ENCODE measurements at regions of chr14 and their contacts with region 1.

Region 1: DNA sequence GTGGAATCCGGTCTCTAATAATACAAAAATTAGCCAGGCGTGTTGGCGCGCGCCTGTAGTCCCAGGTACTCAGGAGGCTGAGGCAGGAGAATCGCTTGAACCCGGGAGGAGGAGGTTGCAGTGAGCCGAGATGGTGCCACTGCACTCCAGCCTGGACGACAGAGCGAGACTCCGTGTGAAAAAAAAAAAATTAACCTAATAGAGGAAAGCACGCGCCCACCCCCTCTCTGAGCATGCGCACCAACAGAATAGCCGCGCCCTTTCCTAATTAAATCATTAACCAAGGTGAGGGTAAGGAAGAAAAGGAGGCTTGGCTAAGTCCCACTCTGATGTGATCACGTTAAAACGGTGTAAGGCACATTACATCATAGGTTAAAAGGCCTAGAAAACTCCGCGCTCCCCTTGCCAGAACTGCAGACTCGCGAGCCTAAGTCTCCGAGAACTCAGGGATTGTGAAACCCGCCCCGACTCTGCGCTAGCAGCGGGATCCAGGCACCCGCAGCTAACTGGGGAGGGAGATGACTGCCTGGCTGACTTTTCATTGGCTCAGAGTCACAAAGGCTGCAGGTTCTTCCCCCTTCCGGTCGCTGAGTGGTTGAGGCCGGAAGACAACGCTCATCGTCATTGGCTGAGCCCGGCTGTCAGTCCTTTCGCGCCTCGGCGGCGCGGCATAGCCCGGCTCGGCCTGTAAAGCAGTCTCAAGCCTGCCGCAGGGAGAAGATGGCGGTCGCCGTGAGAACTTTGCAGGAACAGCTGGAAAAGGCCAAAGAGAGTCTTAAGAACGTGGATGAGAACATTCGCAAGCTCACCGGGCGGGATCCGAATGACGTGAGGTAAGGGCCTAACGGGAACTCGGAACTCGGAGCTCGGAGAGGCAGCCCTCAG is at the start of gene PNN:
- DNase-seq: peak; percentile 94 to 98
- ATAC-seq: peak; percentile 95 to 98 (median 97)
- H3K4me3 ChIP-seq: peak within 1 kb of the TSS; percentile 59 to 96 (median 83)
- H3K27ac ChIP-seq: peak within 1 kb of the TSS; percentile 65 to 96 (median 92)
- H3K4me1 ChIP-seq: peaks cover 0 to 31% (median 26%) of the 10 kb centered on the region in 9 donors
- H3K27me3 ChIP-seq: no peaks in the 10 kb centered on the region
- CTCF ChIP-seq: no peak
- total RNA-seq, gene PNN: 16.8 to 31.0 (median 20.5) TPM

Region 2: DNA sequence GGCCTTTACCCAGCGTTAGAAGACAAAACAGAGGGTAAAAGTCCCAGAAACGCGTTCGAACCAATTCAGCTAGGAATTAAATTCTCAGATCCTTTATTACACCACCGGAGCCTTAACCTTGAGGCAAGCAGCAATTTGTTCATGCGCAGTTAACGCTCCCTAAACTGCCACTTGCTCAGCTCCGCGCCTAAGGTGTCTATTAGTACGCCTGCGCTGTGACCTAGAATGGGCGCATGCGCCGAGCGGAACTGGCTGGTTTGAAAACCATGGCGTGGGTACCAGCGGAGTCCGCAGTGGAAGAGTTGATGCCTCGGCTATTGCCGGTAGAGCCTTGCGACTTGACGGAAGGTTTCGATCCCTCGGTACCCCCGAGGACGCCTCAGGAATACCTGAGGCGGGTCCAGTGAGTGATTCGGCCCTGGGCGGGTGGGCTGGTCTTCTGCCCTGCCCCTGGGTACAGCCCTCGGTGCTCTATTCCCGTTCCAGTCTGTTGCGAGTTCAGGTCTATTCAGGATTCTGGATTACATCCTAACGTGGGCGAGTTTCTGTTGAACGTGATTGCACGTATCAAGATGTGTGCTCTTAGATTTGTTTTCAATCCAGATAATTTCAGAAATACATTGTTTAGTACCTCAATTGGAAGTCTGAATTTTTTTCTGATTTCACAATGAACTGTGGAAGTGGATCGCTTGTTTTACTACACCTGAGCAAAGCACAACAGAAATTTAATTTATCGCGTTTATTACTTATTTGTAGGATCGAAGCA is 60.5 kb before region 1 on chr14 and contains the start of gene GEMIN2:
- intact Hi-C with region 1: loop called in 3 of 10 experiments (anchors 5 to 10 kb)
- DNase-seq: peak; percentile 92 to 93
- ATAC-seq: peak; percentile 99 to 100 (median 100)
- H3K4me3 ChIP-seq: peak within 1 kb of the TSS; percentile 57 to 91 (median 74)
- H3K27ac ChIP-seq: peak within 1 kb of the TSS in 9 of 10 donors; percentile 51 to 87 (median 77)
- H3K4me1 ChIP-seq: peaks cover 0 to 19% (median 13%) of the 10 kb centered on the region in 9 donors
- H3K27me3 ChIP-seq: no peaks in the 10 kb centered on the region
- CTCF ChIP-seq: no peak
- total RNA-seq, gene GEMIN2: 5.6 to 9.7 (median 7.9) TPM

Region 3: DNA sequence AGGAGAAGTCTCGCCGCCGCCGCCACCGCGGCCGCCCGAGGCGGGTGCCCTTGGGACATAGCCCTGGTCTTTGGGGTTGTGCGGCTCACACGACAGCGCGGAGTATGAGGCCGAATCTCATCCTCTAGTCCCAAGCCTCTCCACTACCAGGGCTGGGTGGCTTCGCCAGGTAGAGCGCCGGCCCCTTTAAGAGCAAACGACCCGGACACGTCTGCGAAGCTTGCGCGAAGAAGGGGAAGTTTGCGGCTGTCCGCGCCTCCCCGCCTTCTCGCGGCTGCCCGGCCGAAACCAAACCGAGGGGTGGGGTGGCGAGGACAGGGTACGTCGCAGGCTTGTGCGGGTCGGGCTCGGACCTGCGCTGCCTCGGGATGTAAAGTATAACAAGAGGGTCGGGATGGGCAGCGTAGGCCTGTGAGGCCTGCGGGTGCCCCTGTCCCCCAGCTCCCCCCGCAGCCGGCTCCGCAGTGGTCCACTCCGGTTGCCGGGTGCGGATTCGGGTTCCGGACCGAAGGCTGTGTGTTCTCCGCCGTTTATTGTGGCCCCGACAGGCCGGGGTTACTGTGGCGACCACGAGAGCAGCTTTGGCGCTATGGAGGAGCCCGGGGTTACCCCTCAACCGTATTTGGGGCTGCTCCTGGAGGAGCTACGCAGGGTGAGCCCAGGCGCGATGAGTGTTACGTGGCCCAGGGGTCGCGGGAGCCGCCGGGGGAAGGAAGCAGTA is 92.2 kb after region 1 on chr14:
- intact Hi-C with region 1: loop called in 8 of 10 experiments (anchors 1 to 10 kb)
- DNase-seq: peak; percentile 85 to 87
- ATAC-seq: peak; percentile 94 to 97 (median 96)
- H3K4me3 ChIP-seq: peak overlapping the region; percentile 66 to 96 (median 88)
- H3K27ac ChIP-seq: peak overlapping the region; percentile 89 to 100 (median 98)
- H3K4me1 ChIP-seq: peaks cover 0 to 42% (median 28%) of the 10 kb centered on the region in 9 donors
- H3K27me3 ChIP-seq: no peaks in the 10 kb centered on the region
- CTCF ChIP-seq: no peak

Region 4: DNA sequence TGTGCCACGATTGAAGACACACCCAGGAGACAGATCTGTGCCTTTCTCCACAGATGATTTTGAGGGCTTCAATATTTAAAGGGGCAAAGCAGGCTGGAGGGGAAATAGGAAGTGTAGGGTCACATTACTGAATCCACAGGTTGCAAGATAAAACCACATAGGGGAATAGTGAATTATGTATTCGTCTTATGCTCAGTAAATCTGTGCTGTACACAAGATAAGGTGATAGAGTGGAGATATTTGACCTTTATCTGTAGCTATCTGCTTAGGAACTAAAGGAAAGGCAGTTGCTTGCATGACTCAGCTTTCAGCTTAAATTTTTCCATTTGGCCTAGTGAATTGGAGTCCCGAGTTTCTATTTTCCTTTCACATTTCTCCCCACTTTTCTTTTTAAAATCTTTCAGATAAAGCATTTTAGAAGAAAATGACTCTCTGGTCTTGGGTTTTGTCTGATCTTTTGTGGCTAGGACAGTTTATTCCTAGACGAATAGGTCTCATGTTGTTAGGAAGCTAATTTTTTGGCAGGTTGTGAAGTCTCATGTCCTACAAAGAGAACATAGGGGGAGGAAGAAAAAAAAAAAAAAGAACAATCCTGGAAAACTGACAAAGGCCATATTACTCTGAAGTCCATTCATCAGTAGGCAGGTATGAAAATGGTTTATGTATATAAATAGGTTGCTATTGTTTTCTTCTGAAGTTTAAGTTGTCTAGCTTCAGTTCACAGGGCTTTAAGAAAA is 202.0 kb after region 1 on chr14:
- intact Hi-C with region 1: loop called in 1 of 10 experiments (anchors 10 kb)
- DNase-seq: no peak
- ATAC-seq: peak in 5 of 8 donors; percentile 25 to 79 (median 37)
- H3K4me3 ChIP-seq: no peak overlapping the region
- H3K27ac ChIP-seq: peak overlapping the region in 7 of 10 donors; percentile 22 to 69 (median 50)
- H3K4me1 ChIP-seq: peaks cover 0 to 15% (median 11%) of the 10 kb centered on the region in 9 donors
- H3K27me3 ChIP-seq: no peaks in the 10 kb centered on the region
- CTCF ChIP-seq: no peak

Region 5: GRCh38 chr14:39426605-39427004 is 251.8 kb after region 1 on chr14:
- intact Hi-C with region 1: loop called in 5 of 10 experiments (anchors 5 to 10 kb)
- DNase-seq: no peak
- ATAC-seq: peak in 1 of 8 donors; percentile 7
- H3K4me3 ChIP-seq: no peak overlapping the region
- H3K27ac ChIP-seq: peak overlapping the region in 1 of 10 donors; percentile 33
- H3K4me1 ChIP-seq: peaks cover 0 to 84% (median 68%) of the 10 kb centered on the region in 9 donors
- H3K27me3 ChIP-seq: no peaks in the 10 kb centered on the region
- CTCF ChIP-seq: peak in 5 of 9 donors; percentile 24 to 49 (median 36)

Region 6: DNA sequence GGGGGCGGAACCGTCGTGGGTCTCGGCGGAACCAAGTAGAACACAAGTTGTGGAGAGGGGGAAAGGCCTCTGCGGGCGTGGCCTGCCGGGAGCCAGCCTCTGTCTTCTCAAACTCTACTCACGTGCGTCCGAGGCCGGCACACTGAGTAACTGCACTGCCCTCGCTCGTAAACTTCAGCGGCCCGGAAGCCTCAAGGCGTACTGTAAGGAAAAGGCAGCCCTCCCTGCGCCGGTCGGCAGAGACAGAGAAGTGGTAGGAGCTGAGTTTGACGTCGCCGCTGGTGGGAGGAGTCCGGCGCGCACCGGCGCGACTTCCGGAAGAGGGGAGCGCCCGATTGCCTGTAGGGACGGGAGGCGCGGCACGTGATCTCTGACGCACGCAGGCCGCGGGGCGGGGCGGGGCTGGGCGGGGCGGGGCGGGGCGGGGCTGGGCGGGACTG is 257.4 kb after region 1 on chr14 and contains the start of gene FBXO33:
- intact Hi-C with region 1: loop called in 6 of 10 experiments (anchors 2 to 10 kb)
- DNase-seq: peak; percentile 96 to 97
- ATAC-seq: peak; percentile 95 to 97 (median 95)
- H3K4me3 ChIP-seq: peak within 1 kb of the TSS; percentile 75 to 99 (median 96)
- H3K27ac ChIP-seq: peak within 1 kb of the TSS; percentile 94 to 100 (median 98)
- H3K4me1 ChIP-seq: peaks cover 0 to 46% (median 34%) of the 10 kb centered on the region in 9 donors
- H3K27me3 ChIP-seq: no peaks in the 10 kb centered on the region
- CTCF ChIP-seq: no peak
- total RNA-seq, gene FBXO33: 3.0 to 6.8 (median 5.1) TPM

Region 7: DNA sequence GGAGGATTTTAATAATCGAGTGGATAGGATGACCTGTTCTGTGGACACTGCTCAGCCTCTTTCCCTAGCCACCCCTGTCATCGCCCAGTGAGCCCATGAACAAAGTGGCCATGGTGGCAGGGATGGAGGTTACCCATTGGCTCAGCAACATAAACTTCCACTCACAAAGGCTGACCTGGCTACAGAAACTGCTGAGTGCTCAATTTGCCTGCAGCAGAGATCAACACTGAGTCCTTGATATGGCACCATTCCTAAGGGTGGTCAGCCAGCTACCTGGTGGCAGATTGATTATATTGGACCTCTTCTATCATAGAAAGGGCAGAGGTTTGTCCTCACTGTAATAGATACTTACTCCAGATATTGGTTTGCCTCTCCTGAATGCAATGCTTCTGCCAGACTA is 722.9 kb after region 1 on chr14:
- intact Hi-C with region 1: no loop called
- DNase-seq: no peak
- ATAC-seq: no peak
- H3K4me3 ChIP-seq: no peak overlapping the region
- H3K27ac ChIP-seq: no peak overlapping the region
- H3K4me1 ChIP-seq: no peaks in the 10 kb centered on the region
- H3K27me3 ChIP-seq: no peaks in the 10 kb centered on the region
- CTCF ChIP-seq: no peak

Measured in heart right ventricle (tissue), 16 donors.